ENCODE measurements at regions of chr10 and their contacts with region 1.

Region 1: GRCh38 chr10:117174439-117175214 is 22.7 kb upstream of the KCNK18 start:
- DNase-seq: peak; percentile 93
- ATAC-seq: peak; percentile 82
- H3K4me3 Mint-ChIP-seq: peak overlapping the region; percentile 78
- H3K27ac Mint-ChIP-seq: no peak overlapping the region
- H3K4me1 Mint-ChIP-seq: peaks cover 14% of the 10 kb centered on the region
- H3K27me3 Mint-ChIP-seq: peaks cover 95% of the 10 kb centered on the region
- CTCF ChIP-seq: peak; percentile 81

Region 2: DNA sequence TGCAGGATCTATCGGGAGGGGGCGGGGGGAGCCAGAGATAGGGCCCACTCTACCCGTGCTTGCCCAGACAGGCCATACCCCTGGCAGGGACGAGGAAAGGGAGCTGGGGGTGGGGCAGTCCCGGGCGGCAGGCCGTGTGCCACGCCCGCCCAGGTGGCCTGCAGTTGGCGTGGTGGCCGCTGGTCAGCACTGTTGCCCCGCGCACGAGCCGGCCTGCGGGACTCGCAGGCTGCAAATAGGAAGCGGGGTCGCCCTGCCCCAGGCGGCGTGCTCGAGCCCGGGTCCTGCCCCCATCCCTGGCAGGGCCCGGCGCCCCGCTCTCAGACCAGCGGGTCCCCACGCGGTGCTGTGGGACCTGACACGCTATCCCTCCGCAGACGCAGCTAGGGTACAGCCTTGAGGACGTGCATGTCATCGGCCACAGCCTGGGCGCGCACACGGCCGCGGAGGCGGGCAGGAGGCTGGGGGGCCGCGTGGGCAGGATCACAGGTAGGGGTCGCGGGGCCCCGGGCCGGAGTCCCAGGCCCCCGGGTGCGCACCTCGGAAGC is 547.2 kb before region 1 on chr10:
- CTCF ChIA-PET with region 1: interaction called, 14 read pairs
- POLR2A ChIA-PET with region 1: interaction called, 3 read pairs
- DNase-seq: peak; percentile 76
- ATAC-seq: peak; percentile 96
- H3K4me3 Mint-ChIP-seq: peak overlapping the region; percentile 45
- H3K27ac Mint-ChIP-seq: no peak overlapping the region
- H3K4me1 Mint-ChIP-seq: no peaks in the 10 kb centered on the region
- H3K27me3 Mint-ChIP-seq: peaks cover 15% of the 10 kb centered on the region
- CTCF ChIP-seq: peak; percentile 45

Region 3: GRCh38 chr10:116787893-116788665 is 386.5 kb before region 1 on chr10:
- CTCF ChIA-PET with region 1: interaction called, 33 read pairs
- POLR2A ChIA-PET with region 1: interaction called, 3 read pairs
- DNase-seq: peak; percentile 90
- ATAC-seq: peak; percentile 91
- H3K4me3 Mint-ChIP-seq: peak overlapping the region; percentile 55
- H3K27ac Mint-ChIP-seq: no peak overlapping the region
- H3K4me1 Mint-ChIP-seq: peaks cover 10% of the 10 kb centered on the region; the same call in 1 of the 2 replicates
- H3K27me3 Mint-ChIP-seq: 0 out of 2 replicates have a peak, but pooled peaks cover 6% of the 10 kb centered on the region
- CTCF ChIP-seq: peak; percentile 99

Region 4: DNA sequence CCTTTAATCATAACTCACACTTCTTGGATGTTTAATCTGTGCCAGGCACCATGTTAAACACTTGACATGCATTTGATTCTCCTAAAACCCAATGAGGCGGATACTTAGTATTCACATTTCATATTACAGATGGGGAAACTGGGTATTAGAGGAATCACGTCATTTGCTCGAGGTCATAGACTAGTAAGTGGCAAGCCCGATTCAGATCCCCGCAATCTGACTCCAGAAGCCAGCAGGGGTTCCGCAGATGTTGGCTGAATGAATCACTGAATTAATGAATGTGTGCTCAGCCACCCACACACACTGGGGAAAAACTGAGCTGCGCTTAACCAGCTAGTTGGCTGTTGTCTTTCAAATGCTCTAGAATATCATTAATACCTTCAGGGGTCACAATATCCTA is 347.8 kb before region 1 on chr10:
- CTCF ChIA-PET with region 1: interaction called, 12 read pairs
- POLR2A ChIA-PET with region 1: no interaction called
- DNase-seq: no peak
- ATAC-seq: peak; percentile 24
- H3K4me3 Mint-ChIP-seq: no peak overlapping the region
- H3K27ac Mint-ChIP-seq: no peak overlapping the region
- H3K4me1 Mint-ChIP-seq: peaks cover 23% of the 10 kb centered on the region
- H3K27me3 Mint-ChIP-seq: no peaks in the 10 kb centered on the region; the same call in 1 of the 2 replicates
- CTCF ChIP-seq: no peak

Region 5: GRCh38 chr10:117094856-117095255 is 79.8 kb before region 1 on chr10:
- CTCF ChIA-PET with region 1: interaction called, 11 read pairs
- POLR2A ChIA-PET with region 1: no interaction called
- DNase-seq: no peak
- ATAC-seq: peak; percentile 89
- H3K4me3 Mint-ChIP-seq: no peak overlapping the region
- H3K27ac Mint-ChIP-seq: no peak overlapping the region
- H3K4me1 Mint-ChIP-seq: peaks cover 39% of the 10 kb centered on the region
- H3K27me3 Mint-ChIP-seq: no peaks in the 10 kb centered on the region
- CTCF ChIP-seq: no peak

Region 6: GRCh38 chr10:117186832-117187615 is 12.4 kb after region 1 on chr10:
- CTCF ChIA-PET with region 1: interaction called, 25 read pairs
- POLR2A ChIA-PET with region 1: no interaction called
- DNase-seq: no peak
- ATAC-seq: peak; percentile 69
- H3K4me3 Mint-ChIP-seq: no peak overlapping the region
- H3K27ac Mint-ChIP-seq: no peak overlapping the region
- H3K4me1 Mint-ChIP-seq: peaks cover 5% of the 10 kb centered on the region
- H3K27me3 Mint-ChIP-seq: peaks cover 25% of the 10 kb centered on the region
- CTCF ChIP-seq: no peak

Measured in WTC11 (cell line).